ENCODE measurements at regions of chr12 and their contacts with region 1.

Region 1: GRCh38 chr12:113092607-113093408 is 36.3 kb downstream of the DTX1 start:
- DNase-seq: peak; percentile 89
- ATAC-seq: peak; percentile 91
- H3K4me3 Mint-ChIP-seq: peak overlapping the region; percentile 80
- H3K27ac Mint-ChIP-seq: peak overlapping the region; percentile 70
- H3K4me1 Mint-ChIP-seq: peaks cover 11% of the 10 kb centered on the region
- H3K27me3 Mint-ChIP-seq: no peaks in the 10 kb centered on the region; the same call in none of the 2 replicates
- CTCF ChIP-seq: no peak

Region 2: DNA sequence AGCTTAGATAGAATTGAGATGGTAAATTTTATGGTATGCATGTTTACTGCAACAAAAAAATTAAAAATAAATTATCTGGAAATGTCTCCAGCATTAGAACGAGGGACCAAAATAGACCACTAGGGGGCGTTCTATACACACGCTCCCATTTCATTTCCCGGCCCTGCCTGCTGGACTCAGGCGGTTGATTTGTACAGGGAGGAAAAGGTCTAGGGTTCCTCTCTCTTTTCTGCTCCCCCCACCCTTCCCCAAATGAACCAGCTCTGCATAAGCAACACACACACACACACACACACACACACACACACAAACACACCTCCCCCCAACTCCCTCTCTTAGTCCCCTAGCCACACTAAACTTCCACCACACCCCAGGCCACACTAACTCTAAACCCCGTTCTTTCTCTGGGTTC is 44.1 kb before region 1 on chr12:
- CTCF ChIA-PET with region 1: interaction called, 13 read pairs
- POLR2A ChIA-PET with region 1: interaction called, 4 read pairs
- DNase-seq: peak; percentile 51
- ATAC-seq: peak; percentile 74
- H3K4me3 Mint-ChIP-seq: no peak overlapping the region
- H3K27ac Mint-ChIP-seq: no peak overlapping the region
- H3K4me1 Mint-ChIP-seq: peaks cover 3% of the 10 kb centered on the region; the same call in 1 of the 2 replicates
- H3K27me3 Mint-ChIP-seq: peaks cover 29% of the 10 kb centered on the region
- CTCF ChIP-seq: peak; percentile 68

Region 3: DNA sequence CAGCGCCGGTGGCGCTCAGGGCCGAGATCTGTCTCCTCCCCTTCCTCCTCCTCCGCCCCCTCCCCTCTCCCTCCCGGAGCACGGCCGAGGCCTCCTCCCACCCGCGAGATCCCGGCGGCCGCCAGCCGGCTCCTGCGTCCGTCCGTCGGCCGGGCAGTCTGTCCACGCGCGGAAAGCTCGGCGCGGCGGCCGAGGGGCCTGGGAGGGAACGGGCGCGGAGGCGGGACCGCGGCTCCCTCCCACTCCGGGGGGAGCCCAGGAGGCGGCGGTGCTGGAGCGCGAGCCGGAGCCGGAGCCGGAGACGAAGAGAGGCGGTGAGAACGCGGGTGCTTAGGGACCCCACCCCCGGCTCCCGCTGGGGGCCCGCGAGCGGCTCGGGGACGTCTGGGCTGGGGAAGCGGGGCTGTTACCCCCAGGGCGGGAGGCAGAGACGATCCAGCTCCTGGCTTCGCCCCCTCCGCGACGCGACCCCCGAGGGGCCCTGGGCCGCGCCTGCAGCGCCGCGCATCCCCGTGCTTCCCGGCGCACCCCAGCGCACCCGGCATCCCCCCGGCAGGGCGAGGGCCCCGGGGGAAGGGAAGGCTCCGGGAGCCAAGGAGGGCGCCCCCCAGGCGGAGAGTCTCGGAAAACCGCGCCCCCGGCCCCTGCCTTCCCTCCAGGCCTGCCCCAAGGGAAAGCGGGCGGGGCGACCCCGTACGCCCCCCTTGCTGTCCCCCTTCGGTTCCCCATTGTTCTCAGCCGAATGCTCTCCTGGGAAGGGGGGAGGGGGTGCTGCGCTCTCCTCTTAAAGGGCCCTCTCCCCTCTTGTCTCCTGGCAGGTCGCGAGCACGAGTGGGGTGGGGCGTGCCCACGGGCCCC is 35.9 kb before region 1 on chr12 and contains the start of gene DTX1:
- CTCF ChIA-PET with region 1: interaction called, 12 read pairs
- POLR2A ChIA-PET with region 1: no interaction called
- DNase-seq: no peak
- ATAC-seq: peak; percentile 11
- H3K4me3 Mint-ChIP-seq: peak within 1 kb of the TSS; percentile 64
- H3K27ac Mint-ChIP-seq: no peak within 1 kb of the TSS
- H3K4me1 Mint-ChIP-seq: 0 out of 2 replicates have a peak, but pooled peaks cover 2% of the 10 kb centered on the region
- H3K27me3 Mint-ChIP-seq: peaks cover 39% of the 10 kb centered on the region
- CTCF ChIP-seq: no peak
- total RNA-seq, gene DTX1: 6.2 to 9.2 TPM (median 7.7 TPM) in 3 replicates

Region 4: GRCh38 chr12:113065126-113066007 is 27.4 kb before region 1 on chr12:
- CTCF ChIA-PET with region 1: interaction called, 16 read pairs
- POLR2A ChIA-PET with region 1: interaction called, 3 read pairs
- DNase-seq: peak; percentile 77
- ATAC-seq: peak; percentile 82
- H3K4me3 Mint-ChIP-seq: peak overlapping the region; percentile 47
- H3K27ac Mint-ChIP-seq: no peak overlapping the region
- H3K4me1 Mint-ChIP-seq: peaks cover 31% of the 10 kb centered on the region
- H3K27me3 Mint-ChIP-seq: peaks cover 3% of the 10 kb centered on the region; the same call in 1 of the 2 replicates
- CTCF ChIP-seq: no peak

Region 5: DNA sequence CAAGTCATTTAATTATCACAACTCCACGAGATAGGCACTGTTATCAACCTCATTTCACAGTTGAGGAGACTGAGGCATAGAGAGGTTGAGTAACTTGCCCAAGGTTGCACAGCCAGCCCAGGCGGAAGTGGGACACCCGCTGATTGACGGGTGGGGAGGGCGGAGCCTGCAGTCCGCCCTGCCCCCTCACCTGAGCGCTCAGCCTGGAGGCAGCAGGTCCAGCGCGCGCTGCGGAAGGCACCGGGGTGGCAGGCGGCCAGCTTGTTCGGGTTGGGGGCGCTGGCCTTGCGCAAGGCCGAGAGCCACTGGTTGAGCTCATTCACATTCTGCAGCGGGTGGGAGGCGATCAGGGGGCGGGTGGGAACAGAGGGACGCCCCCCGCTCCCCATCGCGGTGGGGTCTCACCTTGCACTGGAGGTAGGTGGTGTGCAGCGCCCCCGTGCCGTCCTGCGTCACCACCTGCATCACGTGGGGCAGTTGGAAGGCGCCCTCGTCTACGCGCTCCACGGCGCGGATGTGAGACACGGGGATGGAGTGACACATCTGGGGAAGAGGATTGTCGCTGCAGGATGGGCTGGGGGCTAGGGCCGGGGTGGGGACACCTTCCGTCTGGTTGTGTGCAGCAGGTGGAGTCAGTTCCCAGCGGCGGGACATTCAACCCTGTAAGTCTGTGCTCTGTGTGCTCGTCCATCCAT is 11.1 kb after region 1 on chr12:
- CTCF ChIA-PET with region 1: interaction called, 21 read pairs
- POLR2A ChIA-PET with region 1: no interaction called
- DNase-seq: peak; percentile 85
- ATAC-seq: peak; percentile 95
- H3K4me3 Mint-ChIP-seq: peak overlapping the region; percentile 71
- H3K27ac Mint-ChIP-seq: no peak overlapping the region
- H3K4me1 Mint-ChIP-seq: peaks cover 2% of the 10 kb centered on the region
- H3K27me3 Mint-ChIP-seq: no peaks in the 10 kb centered on the region; the same call in 1 of the 2 replicates
- CTCF ChIP-seq: no peak

Region 6: DNA sequence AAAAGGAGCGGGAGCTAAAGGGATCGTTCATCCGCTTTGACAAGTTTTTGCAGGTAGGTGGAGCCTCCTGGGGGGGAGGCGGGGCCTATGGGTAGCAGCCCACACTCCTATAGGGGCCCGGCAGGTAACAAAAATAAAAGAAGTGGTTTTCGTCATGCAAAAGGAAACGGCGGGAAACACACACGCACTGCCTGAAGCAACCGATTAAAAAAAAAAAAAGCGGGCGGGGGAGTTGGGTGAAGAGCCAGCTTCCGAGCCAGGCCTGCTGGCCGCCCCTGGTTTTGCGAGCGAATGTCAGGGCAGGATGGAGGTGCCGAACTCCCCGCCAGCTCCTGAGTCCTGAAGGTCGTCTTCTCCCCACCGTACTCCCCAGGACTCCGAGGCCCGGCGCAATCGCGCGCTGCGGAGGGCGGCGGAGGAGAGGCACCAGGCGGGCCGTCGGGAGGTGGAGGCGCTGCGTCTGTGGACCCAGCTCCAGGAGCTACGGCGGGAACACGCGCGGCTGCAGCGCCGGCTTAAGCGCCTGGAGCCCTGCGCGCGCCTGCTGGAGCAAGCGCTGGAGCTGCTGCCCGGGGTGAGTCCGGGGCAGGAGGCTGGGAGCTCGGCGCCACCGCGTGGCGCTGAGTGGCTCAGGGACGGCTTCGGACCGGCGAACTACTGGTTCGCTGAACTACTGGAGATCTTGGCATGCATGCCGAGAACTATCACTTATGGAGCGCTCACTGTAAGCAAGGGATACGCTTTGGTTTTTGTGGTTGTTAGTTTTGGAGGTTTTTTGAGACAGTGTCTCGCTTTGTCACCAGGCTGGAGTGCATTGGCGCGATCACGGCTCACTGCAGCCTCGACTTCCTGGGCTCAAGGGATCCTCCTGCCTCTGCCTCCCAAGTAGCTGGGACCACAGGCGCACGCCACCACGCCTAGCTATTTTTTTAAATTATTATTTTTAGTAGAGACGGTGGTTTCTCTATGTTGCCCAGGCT is 60.3 kb after region 1 on chr12:
- CTCF ChIA-PET with region 1: interaction called, 18 read pairs
- POLR2A ChIA-PET with region 1: interaction called, 3 read pairs
- DNase-seq: peak; percentile 72
- ATAC-seq: peak; percentile 49
- H3K4me3 Mint-ChIP-seq: peak overlapping the region; percentile 67
- H3K27ac Mint-ChIP-seq: no peak overlapping the region
- H3K4me1 Mint-ChIP-seq: peaks cover 21% of the 10 kb centered on the region
- H3K27me3 Mint-ChIP-seq: peaks cover 58% of the 10 kb centered on the region
- CTCF ChIP-seq: no peak

Region 7: DNA sequence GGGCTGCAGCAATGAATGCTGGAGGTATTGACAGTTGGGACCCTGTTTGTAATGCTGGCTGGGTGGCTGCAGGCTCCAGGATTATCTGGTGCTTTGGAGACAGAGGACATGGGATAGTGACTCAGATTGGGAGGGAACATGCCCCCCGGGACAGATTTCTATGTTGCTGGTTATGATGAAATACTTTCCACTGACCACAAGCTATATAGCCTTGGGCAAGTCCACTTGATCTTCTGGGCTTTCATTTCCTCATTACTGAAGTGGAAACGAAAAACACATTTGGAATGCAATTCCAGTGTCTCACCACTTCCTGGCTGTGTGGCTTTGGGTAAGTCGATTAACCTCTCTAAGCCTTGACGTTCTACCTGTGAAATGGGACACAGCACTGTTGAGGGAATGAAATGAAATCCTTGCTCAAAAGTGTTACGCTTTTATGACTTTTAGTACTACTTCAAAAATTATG is 122.2 kb after region 1 on chr12:
- CTCF ChIA-PET with region 1: no interaction called
- POLR2A ChIA-PET with region 1: no interaction called
- DNase-seq: no peak
- ATAC-seq: no peak
- H3K4me3 Mint-ChIP-seq: no peak overlapping the region
- H3K27ac Mint-ChIP-seq: peak overlapping the region; percentile 63; the same call in 1 of the 2 replicates
- H3K4me1 Mint-ChIP-seq: peaks cover 3% of the 10 kb centered on the region
- H3K27me3 Mint-ChIP-seq: no peaks in the 10 kb centered on the region
- CTCF ChIP-seq: no peak

Measured in WTC11 (cell line).